Activated T-helper 2 cell treated with anti-CD3 and anti-CD28 coated beads, Interferon-gamma antibody, Interleukin-2, Interleukin-4, amounts not matched to agents 10 μg/mL and 5 μg/mL and 100 μg/mL, durations not matched to agents 14 hours and 24 hours and 36 hours (primary cell): ENCODE measurements at regions of chr1 and their contacts with region 1.

Region 1: GRCh38 chr1:86741947-86742572 is 37.7 kb downstream of the SH3GLB1 start:
- DNase-seq: no peak
- H3K4me3 Mint-ChIP-seq: no peak overlapping the region
- H3K27ac Mint-ChIP-seq: no peak overlapping the region
- H3K4me1 Mint-ChIP-seq: no peaks in the 10 kb centered on the region
- H3K27me3 Mint-ChIP-seq: no peaks in the 10 kb centered on the region

Region 2: DNA sequence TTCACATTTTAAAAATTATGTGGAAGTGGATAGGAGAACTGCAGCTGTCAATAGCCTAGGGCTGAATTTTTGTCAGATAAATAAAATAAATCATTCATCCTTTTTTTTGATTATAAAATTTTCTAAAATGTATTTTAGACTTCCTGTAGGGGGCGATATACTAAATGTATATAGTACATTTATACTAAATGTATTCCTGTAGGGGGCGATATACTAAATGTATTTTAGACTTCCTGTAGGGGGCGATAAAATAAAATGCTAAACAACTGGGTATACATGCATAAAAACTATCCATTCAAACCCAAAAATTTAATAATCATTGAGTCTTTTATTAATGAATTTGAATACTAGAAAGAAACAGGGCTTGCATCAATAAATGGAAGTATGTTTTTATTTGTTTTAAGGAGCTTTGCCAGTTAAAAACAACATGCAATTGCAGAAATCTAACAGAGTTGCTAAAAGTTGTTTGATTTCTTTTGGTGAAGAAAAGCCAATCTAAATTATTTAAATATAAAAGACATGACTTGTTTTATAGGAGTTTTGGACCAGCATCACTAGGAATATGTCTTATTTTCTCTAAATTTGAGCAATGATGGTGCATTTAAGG is 242.0 kb before region 1 on chr1:
- intact Hi-C with region 1: loop called (anchors 5 kb)
- DNase-seq: no peak
- H3K4me3 Mint-ChIP-seq: no peak overlapping the region
- H3K27ac Mint-ChIP-seq: no peak overlapping the region
- H3K4me1 Mint-ChIP-seq: peaks cover 14% of the 10 kb centered on the region
- H3K27me3 Mint-ChIP-seq: peaks cover 37% of the 10 kb centered on the region